Gastrocnemius medialis (tissue), 4 donors: ENCODE measurements at regions of chr11 and their contacts with region 1.

Region 1: DNA sequence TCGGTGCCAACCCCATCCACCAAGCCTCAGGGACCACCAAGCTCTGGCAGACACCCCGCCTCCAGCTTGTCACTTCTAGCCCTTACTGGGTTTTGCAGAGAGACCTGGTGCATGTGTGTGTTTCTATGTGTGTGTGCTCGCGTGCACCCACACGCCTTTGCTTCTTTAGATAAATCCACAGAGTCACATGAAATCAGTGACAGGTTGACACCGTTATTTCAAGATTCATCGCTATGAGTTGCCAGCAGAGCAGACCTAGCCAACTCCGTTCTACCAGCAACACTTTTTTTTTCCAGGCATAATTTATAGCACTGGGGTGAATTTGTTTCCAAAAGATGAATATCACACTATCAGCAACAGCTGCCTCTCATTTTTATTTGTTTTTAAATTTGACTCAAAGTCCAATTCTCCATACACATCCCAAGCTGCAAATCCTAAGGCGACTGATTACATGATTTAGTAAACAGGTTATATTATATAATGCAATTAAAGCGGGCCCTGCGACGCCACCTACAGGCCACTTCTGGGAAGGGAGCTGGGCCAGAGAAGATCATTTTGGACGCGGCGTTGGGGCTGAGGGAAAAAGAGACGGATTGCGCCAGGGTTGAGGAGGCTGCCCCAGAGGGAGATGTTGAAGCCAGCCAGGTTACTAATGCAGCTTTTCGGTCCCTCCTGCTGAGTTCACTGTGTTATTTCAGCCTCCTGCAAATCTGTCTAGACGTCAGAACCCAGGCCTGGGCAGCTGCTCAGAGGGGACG is 150.5 kb downstream of the FEZ1 start:
- DNase-seq: peak; percentile 71 to 89
- ATAC-seq: peak; percentile 83 to 93
- H3K4me3 ChIP-seq: no peak overlapping the region
- H3K27ac ChIP-seq: peak overlapping the region; percentile 68 to 85 (median 72)
- H3K4me1 ChIP-seq: peaks cover 24 to 29% of the 10 kb centered on the region in 2 donors
- H3K27me3 ChIP-seq: no peaks in the 10 kb centered on the region
- CTCF ChIP-seq: peak; percentile 90 to 94 (median 91)
- POLR2A ChIP-seq: no peak

Region 2: DNA sequence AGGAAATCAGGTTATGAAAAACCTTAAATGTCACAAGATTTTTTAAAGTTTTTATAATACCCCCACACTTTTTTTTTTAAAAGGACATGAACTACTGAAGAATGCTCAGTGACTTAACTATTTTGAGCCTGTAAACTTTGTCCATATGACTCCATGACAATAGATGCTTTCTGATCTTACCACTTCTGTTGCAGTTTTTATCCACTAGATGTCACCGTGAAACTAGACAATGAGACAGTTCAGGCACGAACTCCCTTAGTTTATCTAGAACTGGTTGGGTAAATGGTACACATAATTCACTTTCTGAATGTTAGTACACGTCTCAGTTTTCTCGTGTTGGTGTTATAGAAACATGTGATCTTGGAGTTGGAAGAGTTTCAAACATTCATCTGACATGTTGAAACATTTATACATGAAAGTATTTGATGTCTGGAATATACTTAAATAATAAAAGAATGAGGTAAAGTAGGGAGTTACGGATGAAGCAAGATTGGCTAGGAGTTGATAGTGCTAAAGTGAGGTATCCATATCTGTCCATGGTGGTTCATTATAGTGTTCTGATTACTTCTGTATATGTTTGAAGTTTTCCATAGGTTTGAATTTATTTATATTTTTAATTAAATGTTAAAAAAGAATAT is 383.5 kb before region 1 on chr11:
- in situ Hi-C with region 1: loop called in 1 of 4 experiments (anchors 25 kb)
- intact Hi-C with region 1: loop called (anchors 5 kb)
- DNase-seq: no peak
- ATAC-seq: peak; percentile 75 to 90
- H3K4me3 ChIP-seq: no peak overlapping the region
- H3K27ac ChIP-seq: no peak overlapping the region
- H3K4me1 ChIP-seq: no peaks in the 10 kb centered on the region
- H3K27me3 ChIP-seq: no peaks in the 10 kb centered on the region
- CTCF ChIP-seq: peak in 4 of 5 experiments; percentile 58 to 71 (median 60)
- POLR2A ChIP-seq: no peak

Region 3: DNA sequence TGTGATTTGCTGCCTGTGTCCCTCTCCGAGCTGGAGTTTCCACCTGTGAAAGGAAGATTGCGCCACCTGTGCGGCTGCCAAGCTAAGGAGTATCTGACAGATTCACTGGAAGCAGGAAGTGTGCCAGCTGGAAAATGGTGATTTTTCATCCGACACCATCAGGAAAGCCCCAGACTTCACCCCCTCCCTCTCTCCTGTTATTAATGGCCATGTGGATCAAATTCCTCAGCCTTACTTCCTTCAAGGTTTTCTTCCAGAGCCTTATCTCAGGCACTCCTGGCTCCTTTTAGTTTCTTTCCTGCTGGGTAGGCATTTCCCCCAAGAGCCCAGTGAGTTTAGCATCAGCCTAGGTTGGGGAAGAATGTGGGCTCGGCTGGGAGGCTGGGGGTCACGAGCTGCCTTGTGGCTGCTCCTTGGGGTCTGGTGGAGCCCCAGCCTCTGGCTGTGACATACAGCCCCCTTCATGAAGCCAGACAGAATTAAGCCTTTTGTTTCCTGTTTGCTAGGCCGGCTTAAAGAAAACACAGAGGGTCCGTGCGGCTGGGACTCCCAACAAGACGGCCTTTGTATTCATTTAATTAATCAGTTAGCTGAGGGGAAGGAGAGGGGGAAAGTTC is 144.0 kb before region 1 on chr11:
- in situ Hi-C with region 1: no loop called
- intact Hi-C with region 1: no loop called
- DNase-seq: peak in 1 of 2 donors; percentile 55
- ATAC-seq: peak; percentile 31 to 61
- H3K4me3 ChIP-seq: no peak overlapping the region
- H3K27ac ChIP-seq: no peak overlapping the region
- H3K4me1 ChIP-seq: peaks cover 13 to 14% of the 10 kb centered on the region in 2 donors
- H3K27me3 ChIP-seq: no peaks in the 10 kb centered on the region
- CTCF ChIP-seq: no peak
- POLR2A ChIP-seq: no peak

Region 4: GRCh38 chr11:125214571-125215565 is 130.7 kb before region 1 on chr11:
- in situ Hi-C with region 1: no loop called
- intact Hi-C with region 1: loop called (anchors 5 kb)
- DNase-seq: no peak
- ATAC-seq: no peak
- H3K4me3 ChIP-seq: no peak overlapping the region
- H3K27ac ChIP-seq: peak overlapping the region; percentile 24 to 48 (median 44)
- H3K4me1 ChIP-seq: peaks cover 43 to 76% of the 10 kb centered on the region in 2 donors
- H3K27me3 ChIP-seq: no peaks in the 10 kb centered on the region
- CTCF ChIP-seq: no peak
- POLR2A ChIP-seq: no peak

Region 5: GRCh38 chr11:125281831-125282595 is 63.6 kb before region 1 on chr11:
- in situ Hi-C with region 1: no loop called
- intact Hi-C with region 1: loop called (anchors 2 kb)
- DNase-seq: no peak
- ATAC-seq: peak; percentile 15 to 36
- H3K4me3 ChIP-seq: no peak overlapping the region
- H3K27ac ChIP-seq: peak overlapping the region in 3 of 4 donors; percentile 29 to 61 (median 49)
- H3K4me1 ChIP-seq: peaks cover 32 to 33% of the 10 kb centered on the region in 2 donors
- H3K27me3 ChIP-seq: no peaks in the 10 kb centered on the region
- CTCF ChIP-seq: no peak
- POLR2A ChIP-seq: no peak

Region 6: DNA sequence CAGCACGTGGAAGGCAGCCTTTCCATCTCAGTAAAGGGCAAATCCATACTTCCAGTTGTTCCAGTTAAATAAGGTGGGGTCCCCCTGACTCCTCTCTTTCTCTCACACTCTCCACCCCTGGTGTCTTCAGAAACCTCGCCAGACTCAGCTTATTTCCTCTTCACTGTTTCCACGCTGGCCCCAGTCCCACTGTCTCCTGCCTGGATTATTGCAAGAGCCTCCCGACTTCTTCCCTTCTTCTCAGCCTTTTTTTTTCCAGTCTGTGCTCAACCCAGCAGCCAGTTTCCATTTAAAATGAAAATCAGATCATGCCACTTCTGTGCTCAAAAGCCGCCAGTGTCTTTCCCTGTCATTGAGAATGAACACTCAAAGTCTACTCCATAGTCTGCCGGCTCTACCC is 49.7 kb before region 1 on chr11:
- in situ Hi-C with region 1: no loop called
- intact Hi-C with region 1: loop called (anchors 2 kb)
- DNase-seq: no peak
- ATAC-seq: no peak
- H3K4me3 ChIP-seq: no peak overlapping the region
- H3K27ac ChIP-seq: no peak overlapping the region
- H3K4me1 ChIP-seq: peaks cover 19 to 22% of the 10 kb centered on the region in 2 donors
- H3K27me3 ChIP-seq: no peaks in the 10 kb centered on the region
- CTCF ChIP-seq: no peak
- POLR2A ChIP-seq: no peak

Region 7: DNA sequence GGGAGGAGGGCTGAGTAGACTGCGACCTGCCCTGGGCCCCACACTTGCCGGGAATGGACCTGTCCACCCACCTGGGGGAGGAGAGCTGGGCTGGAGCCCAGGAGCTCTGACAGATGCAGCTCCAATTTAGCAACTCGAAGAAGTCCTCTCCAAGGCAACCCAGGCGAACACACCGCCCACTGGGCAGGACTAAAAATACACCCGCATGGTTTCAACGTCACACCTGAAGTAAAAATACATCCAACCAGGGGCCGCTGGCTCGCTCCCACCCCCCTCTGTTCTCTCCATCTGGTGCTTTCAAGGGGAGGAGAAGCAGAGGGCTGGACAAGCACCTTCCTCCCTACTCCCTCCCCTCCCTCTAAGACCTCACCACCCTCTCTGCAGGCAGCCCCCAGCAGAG is 30.5 kb after region 1 on chr11:
- in situ Hi-C with region 1: no loop called
- intact Hi-C with region 1: loop called (anchors 2 kb)
- DNase-seq: peak; percentile 89 to 96
- ATAC-seq: peak; percentile 83 to 84
- H3K4me3 ChIP-seq: peak overlapping the region in 1 of 4 donors; percentile 3
- H3K27ac ChIP-seq: peak overlapping the region; percentile 78 to 93 (median 90)
- H3K4me1 ChIP-seq: peaks cover 53 to 57% of the 10 kb centered on the region in 2 donors
- H3K27me3 ChIP-seq: no peaks in the 10 kb centered on the region
- CTCF ChIP-seq: no peak
- POLR2A ChIP-seq: peak in 1 of 2 donors; percentile 77

Region 8: GRCh38 chr11:125429166-125429707 is 83.6 kb after region 1 on chr11:
- in situ Hi-C with region 1: no loop called
- intact Hi-C with region 1: loop called (anchors 1 kb)
- DNase-seq: peak; percentile 42 to 72
- ATAC-seq: peak in 1 of 2 donors; percentile 16
- H3K4me3 ChIP-seq: no peak overlapping the region
- H3K27ac ChIP-seq: peak overlapping the region; percentile 24 to 49 (median 39)
- H3K4me1 ChIP-seq: peaks cover 63 to 69% of the 10 kb centered on the region in 2 donors
- H3K27me3 ChIP-seq: no peaks in the 10 kb centered on the region
- CTCF ChIP-seq: peak; percentile 67 to 81 (median 74)
- POLR2A ChIP-seq: no peak